ENCODE measurements at regions of chr11 and their contacts with region 1.

Region 1: DNA sequence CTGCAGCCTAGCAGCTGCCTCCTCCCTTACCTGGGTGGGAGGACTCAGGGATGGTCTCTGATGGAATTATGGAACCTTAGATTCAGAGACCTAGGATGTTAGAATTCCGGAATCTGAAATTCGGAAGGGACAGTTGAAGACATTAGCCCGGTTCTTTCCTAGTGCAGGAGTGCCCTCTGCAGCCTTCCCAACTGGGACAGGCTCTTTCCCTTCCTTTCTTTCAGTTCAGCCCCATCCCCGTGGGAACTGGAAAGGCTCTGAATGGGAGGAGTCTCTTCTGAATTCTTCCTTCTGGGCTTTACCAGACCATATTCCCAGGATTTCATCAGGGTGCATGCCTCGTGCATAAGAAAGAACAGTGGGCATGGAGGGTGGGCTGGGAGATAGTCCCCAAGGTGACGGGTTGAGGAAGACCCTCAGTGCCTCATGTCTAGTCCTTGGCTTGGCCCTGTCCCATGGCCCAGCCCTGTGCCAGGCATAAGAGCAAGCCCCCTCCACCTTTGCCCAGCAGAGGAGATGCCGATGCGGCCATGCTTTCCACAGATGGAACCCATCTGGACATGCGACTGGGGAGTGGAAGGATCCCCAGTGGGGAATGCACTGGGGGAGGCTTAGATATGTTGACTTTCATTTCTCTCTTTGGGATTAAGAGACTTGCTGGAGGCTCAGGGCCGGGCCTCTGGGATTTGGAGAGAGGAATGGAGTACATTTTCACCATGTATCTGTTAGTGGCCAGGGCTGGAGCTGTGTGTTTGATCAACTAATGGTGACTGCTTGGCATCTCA is 14.4 kb downstream of the DNAJB13 start:
- DNase-seq: no peak
- H3K4me3 ChIP-seq: no peak overlapping the region
- H3K27ac ChIP-seq: no peak overlapping the region
- H3K4me1 ChIP-seq: peaks cover 17% of the 10 kb centered on the region
- CTCF ChIP-seq: no peak

Region 2: DNA sequence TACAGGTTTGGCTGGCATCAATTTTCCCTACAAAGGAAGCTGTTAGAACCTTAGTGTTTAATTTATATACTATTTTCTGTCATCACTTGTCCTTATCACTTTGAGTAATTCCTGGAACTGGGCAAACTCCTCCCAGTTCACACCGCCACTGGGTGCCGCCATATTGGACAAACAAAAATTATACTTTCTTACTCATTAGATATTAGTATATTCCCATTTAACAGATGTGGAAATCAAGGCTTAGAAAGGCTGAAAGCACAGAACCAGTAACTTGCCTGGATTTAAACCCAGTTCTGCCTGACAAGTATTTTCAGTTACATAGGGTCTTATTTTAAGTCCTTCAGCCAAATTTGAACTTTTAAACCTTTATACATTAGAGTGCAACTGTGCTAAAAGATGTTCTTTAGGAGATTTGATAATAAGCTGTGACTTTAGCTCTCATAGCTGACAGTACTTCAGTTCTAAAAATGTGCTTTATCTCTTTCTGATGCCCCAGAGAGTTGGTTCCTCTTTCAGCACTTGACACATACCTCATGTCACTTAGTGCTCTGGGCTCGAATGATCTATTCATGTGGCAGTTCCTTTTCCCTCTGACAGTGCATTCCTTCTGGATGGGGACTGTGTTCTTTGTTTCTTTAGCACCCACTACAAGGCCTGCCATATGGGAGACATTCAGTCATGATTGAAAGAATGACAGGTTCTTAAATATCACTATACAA is 114.1 kb before region 1 on chr11:
- CTCF ChIA-PET with region 1: no interaction called
- POLR2A ChIA-PET with region 1: no interaction called
- intact Hi-C with region 1: no loop called
- DNase-seq: no peak
- H3K4me3 ChIP-seq: no peak overlapping the region
- H3K27ac ChIP-seq: no peak overlapping the region
- H3K4me1 ChIP-seq: no peaks in the 10 kb centered on the region
- CTCF ChIP-seq: no peak

Region 3: GRCh38 chr11:73982969-73983740 is 17.9 kb after region 1 on chr11:
- CTCF ChIA-PET with region 1: interaction called, 3 read pairs
- POLR2A ChIA-PET with region 1: interaction called, 18 read pairs
- intact Hi-C with region 1: no loop called
- DNase-seq: peak; percentile 98
- H3K4me3 ChIP-seq: peak overlapping the region; percentile 91
- H3K27ac ChIP-seq: peak overlapping the region; percentile 91
- H3K4me1 ChIP-seq: peaks cover 65% of the 10 kb centered on the region
- CTCF ChIP-seq: no peak

Region 4: GRCh38 chr11:74011360-74012073 is 46.2 kb after region 1 on chr11:
- CTCF ChIA-PET with region 1: no interaction called
- POLR2A ChIA-PET with region 1: no interaction called
- intact Hi-C with region 1: no loop called
- DNase-seq: no peak
- H3K4me3 ChIP-seq: no peak overlapping the region
- H3K27ac ChIP-seq: no peak overlapping the region
- H3K4me1 ChIP-seq: peaks cover 37% of the 10 kb centered on the region
- CTCF ChIP-seq: no peak

Region 5: GRCh38 chr11:74090701-74091100 is 125.4 kb after region 1 on chr11:
- CTCF ChIA-PET with region 1: no interaction called
- POLR2A ChIA-PET with region 1: no interaction called
- intact Hi-C with region 1: loop called (anchors 2 kb)
- DNase-seq: peak; percentile 14
- H3K4me3 ChIP-seq: no peak overlapping the region
- H3K27ac ChIP-seq: no peak overlapping the region
- H3K4me1 ChIP-seq: no peaks in the 10 kb centered on the region
- CTCF ChIP-seq: peak; percentile 45; the same call in 1 of the 2 replicates

Region 6: DNA sequence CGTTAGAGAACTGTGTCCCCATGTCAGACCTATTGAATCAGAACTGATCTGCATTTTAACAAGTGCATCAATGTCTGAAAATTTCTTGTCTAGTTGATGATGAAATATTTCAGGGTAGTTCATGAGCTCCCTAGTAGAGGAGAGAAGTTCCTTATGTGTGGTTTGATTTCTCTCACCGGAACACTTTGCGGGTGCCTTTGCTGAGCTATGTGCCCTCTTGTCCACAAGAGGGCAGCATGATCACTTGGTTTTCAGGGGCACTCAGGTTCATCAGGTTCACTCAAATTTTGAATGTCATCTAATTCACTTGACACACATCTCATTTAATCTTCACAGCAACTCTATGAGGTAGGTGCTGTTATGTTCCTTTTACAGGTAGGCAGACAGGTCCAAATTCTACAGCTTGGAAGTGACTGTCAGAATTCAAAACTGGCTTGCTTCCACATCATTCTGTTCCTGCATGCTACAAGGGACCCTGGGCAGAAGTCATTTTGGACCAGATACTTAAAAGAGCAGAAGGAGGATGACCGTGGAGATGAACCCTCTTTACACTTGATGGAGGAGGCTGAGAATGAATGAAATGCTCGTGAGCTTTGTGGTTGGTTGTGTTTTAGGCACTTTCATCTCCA is 290.6 kb after region 1 on chr11:
- CTCF ChIA-PET with region 1: no interaction called
- POLR2A ChIA-PET with region 1: no interaction called
- intact Hi-C with region 1: loop called (anchors 1 kb)
- DNase-seq: peak; percentile 65
- H3K4me3 ChIP-seq: no peak overlapping the region
- H3K27ac ChIP-seq: no peak overlapping the region
- H3K4me1 ChIP-seq: no peaks in the 10 kb centered on the region
- CTCF ChIP-seq: peak; percentile 96

Region 7: DNA sequence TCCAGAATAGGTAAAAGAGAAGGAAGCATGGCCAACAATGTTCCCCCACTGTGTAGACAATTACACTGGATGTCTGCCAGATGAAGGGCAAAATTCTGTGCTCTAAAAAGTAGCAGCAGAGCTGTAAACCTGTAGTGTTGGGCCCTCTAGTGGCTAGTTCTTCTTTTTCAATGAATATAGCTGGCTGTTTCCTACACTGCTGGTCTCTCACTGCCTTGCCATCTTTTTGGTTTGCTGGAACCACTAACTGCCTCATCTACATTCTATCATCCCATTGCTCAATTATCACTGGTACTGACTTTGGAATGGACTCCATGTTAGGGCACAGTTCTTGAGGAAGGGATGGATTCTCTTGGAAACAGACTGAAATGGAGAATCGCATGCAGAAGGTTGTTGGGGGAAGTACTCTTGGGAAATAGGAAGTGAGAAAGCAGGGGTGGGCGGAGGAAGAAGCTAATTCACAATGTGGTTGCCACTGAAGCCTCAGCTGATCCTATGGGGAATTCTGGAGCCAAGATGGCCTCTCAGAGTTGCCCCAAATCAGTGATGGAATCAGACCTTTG is 484.2 kb after region 1 on chr11:
- CTCF ChIA-PET with region 1: no interaction called
- POLR2A ChIA-PET with region 1: no interaction called
- intact Hi-C with region 1: loop called (anchors 5 kb)
- DNase-seq: peak; percentile 78
- H3K4me3 ChIP-seq: no peak overlapping the region
- H3K27ac ChIP-seq: no peak overlapping the region
- H3K4me1 ChIP-seq: peaks cover 5% of the 10 kb centered on the region
- CTCF ChIP-seq: peak; percentile 88

Measured in OCI-LY7 (cell line).